ENCODE measurements at regions of chr6 and their contacts with region 1.

Region 1: GRCh38 chr6:144036064-144036834 is 28.2 kb upstream of the PLAGL1 start:
- DNase-seq: peak; percentile 8
- H3K4me3 Mint-ChIP-seq: peak overlapping the region; percentile 17
- H3K27ac Mint-ChIP-seq: peak overlapping the region; percentile 1
- H3K4me1 Mint-ChIP-seq: peaks cover 17% of the 10 kb centered on the region
- H3K27me3 Mint-ChIP-seq: peaks cover under 1% of the 10 kb centered on the region

Region 2: DNA sequence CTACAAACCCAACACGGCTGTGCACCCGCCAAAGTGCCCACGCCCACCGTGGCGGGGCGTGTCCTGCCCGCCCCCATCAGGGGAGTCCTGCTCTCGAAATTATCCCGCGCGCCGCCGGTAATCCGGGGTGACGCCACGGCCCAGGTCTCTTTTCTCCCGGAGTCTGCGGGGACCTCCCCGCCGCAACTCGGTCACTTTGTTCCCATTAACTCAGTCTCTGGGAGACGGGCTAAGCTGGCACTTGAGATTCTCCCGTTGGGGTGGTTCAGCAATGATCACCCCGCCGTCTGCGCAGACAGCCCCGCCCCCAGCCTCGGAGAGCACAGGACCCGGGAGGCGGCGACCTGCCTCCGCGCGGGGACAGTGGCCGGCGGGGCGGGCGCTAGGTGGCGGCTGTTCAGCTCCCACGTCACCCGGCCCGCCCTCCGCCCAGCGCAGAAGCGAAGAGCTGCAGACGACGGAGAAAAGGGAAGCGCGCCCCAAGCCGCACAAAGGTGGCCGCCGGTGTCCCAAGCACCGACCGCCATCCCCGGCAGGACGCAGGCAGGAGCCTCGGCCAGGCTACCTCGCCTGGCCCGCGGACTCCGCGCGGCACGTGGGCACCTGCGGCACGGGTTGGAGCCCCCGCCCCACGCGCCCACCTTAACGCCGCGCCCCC is 27.6 kb after region 1 on chr6:
- intact Hi-C with region 1: loop called (anchors 1 kb)
- DNase-seq: peak; percentile 89
- H3K4me3 Mint-ChIP-seq: peak overlapping the region; percentile 83
- H3K27ac Mint-ChIP-seq: peak overlapping the region; percentile 82
- H3K4me1 Mint-ChIP-seq: peaks cover 44% of the 10 kb centered on the region
- H3K27me3 Mint-ChIP-seq: no peaks in the 10 kb centered on the region

Region 3: GRCh38 chr6:144158133-144158532 is 121.9 kb after region 1 on chr6:
- intact Hi-C with region 1: no loop called
- DNase-seq: no peak
- H3K4me3 Mint-ChIP-seq: no peak overlapping the region
- H3K27ac Mint-ChIP-seq: no peak overlapping the region
- H3K4me1 Mint-ChIP-seq: peaks cover 70% of the 10 kb centered on the region
- H3K27me3 Mint-ChIP-seq: no peaks in the 10 kb centered on the region